Dendritic cell treated with granulocyte-macrophage colony-stimulating factor and Interleukin-4, amounts not matched to agents 40 ng/mL and 50 ng/mL, for 4 days (primary cell): ENCODE measurements at regions of chr2 and their contacts with region 1.

Region 1: GRCh38 chr2:38740851-38741731 is 10.1 kb downstream of the SRSF7 start:
- H3K4me3 Mint-ChIP-seq: no peak overlapping the region
- H3K27ac Mint-ChIP-seq: no peak overlapping the region
- H3K4me1 Mint-ChIP-seq: peaks cover 41% of the 10 kb centered on the region
- H3K27me3 Mint-ChIP-seq: no peaks in the 10 kb centered on the region

Region 2: DNA sequence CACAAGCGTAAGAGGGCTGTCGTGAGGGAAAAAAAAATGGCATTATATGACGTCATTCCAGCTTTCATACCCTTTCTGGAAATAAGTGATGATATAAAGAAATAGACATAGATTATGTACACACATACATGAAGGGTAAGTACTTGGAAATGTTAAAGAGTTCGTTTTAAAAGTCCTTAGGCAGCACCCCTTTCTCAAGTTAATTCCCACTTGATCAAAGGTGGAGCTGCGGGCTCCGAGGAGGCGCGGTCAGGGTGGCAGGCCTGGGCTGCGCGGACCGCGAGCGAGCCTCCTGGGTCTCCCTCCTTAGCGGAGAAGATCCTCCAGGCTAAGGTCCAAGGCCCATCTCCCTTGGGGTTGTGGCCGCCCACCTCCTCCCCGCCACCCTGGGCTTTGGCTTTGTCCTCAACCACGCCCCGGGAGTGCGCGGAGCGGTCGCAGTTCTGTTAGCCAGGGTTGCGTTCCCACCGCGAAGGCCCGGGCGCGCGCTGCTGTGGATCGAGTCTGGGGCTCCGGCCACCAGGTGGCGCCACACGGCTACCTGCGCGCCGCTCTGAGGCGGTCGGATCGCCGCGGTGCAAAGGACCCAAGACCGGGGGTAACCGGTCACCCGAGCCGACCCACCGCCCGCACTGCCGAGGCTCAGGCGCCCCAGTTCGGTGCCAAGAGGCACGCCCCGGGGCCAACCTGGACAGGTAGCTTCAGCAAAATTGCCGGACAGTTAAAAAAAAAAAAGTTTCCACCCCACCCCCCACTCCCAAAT is 205.2 kb before region 1 on chr2:
- intact Hi-C with region 1: loop called (anchors 2 kb)
- H3K4me3 Mint-ChIP-seq: peak overlapping the region; percentile 64
- H3K27ac Mint-ChIP-seq: no peak overlapping the region
- H3K4me1 Mint-ChIP-seq: peaks cover 24% of the 10 kb centered on the region
- H3K27me3 Mint-ChIP-seq: peaks cover 39% of the 10 kb centered on the region

Region 3: DNA sequence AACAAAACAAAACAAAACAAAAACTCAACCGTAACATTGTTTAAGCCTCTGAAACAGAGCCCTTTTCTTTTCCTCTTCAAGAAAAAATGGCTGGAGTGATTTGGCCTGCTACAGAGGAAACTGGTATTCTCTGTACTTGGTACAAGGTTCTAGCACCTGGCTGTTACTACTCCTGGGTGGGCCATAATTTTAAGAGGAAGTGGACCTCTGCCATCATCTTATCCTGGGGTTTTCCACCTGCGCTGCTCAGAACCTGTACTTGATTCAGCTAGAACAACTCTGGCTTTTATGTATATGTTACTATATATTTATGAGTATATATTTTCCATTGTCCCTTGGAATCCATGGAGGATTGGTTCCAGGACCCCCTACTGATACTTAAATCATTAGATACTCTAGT is 12.4 kb before region 1 on chr2:
- intact Hi-C with region 1: loop called (anchors 1 kb)
- H3K4me3 Mint-ChIP-seq: no peak overlapping the region
- H3K27ac Mint-ChIP-seq: no peak overlapping the region
- H3K4me1 Mint-ChIP-seq: peaks cover 16% of the 10 kb centered on the region
- H3K27me3 Mint-ChIP-seq: no peaks in the 10 kb centered on the region